Mammary epithelial cell (primary cell): ENCODE measurements at regions of chr20 and their contacts with region 1.

Region 1: DNA sequence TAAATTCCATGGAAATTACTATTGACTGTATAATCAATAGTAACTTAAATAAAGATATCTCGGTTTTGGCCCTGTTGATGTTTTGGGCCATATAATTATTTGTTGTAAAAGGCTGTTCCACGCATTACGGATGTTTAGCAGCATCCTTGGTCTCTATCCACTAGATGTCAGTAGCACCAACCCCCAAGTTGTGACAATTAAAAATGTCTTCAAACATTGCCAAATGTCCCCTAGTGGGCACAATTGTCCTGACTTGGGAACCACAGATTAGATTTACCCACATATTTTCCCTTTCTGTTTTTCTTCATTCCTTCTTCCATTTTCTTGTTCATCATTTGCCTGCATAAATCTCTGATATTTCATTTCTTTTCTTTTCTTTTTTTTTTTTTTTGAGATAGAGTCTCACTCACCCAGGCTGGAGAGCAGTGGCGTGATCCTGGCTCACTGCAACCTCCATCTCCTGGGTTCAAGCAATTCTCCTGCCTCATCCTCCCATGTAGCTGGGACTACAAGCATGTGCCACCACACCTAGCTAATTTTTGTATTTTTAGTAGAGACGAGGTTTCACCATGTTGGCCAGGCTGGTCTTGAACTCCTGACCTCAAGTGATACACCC is 13.6 kb upstream of the WFDC8 start:
- DNase-seq: peak; percentile 56
- H3K4me3 ChIP-seq: no peak overlapping the region
- H3K27ac ChIP-seq: no peak overlapping the region
- H3K4me1 ChIP-seq: no peaks in the 10 kb centered on the region
- H3K27me3 ChIP-seq: peaks cover 4% of the 10 kb centered on the region
- CTCF ChIP-seq: peak; percentile 76 to 95

Region 2: GRCh38 chr20:45629496-45630100 is 36.9 kb after region 1 on chr20 and contains the start of gene WFDC10A:
- CTCF ChIA-PET with region 1: no interaction called
- dilution Hi-C with region 1: no loop called
- in situ Hi-C with region 1: no loop called
- intact Hi-C with region 1: loop called (anchors 5 kb)
- DNase-seq: peak; percentile 68
- H3K4me3 ChIP-seq: no peak within 1 kb of the TSS
- H3K27ac ChIP-seq: no peak within 1 kb of the TSS
- H3K4me1 ChIP-seq: no peaks in the 10 kb centered on the region
- H3K27me3 ChIP-seq: no peaks in the 10 kb centered on the region
- CTCF ChIP-seq: peak; percentile 88 to 96
- total RNA-seq, gene WFDC10A: not detected

Region 3: DNA sequence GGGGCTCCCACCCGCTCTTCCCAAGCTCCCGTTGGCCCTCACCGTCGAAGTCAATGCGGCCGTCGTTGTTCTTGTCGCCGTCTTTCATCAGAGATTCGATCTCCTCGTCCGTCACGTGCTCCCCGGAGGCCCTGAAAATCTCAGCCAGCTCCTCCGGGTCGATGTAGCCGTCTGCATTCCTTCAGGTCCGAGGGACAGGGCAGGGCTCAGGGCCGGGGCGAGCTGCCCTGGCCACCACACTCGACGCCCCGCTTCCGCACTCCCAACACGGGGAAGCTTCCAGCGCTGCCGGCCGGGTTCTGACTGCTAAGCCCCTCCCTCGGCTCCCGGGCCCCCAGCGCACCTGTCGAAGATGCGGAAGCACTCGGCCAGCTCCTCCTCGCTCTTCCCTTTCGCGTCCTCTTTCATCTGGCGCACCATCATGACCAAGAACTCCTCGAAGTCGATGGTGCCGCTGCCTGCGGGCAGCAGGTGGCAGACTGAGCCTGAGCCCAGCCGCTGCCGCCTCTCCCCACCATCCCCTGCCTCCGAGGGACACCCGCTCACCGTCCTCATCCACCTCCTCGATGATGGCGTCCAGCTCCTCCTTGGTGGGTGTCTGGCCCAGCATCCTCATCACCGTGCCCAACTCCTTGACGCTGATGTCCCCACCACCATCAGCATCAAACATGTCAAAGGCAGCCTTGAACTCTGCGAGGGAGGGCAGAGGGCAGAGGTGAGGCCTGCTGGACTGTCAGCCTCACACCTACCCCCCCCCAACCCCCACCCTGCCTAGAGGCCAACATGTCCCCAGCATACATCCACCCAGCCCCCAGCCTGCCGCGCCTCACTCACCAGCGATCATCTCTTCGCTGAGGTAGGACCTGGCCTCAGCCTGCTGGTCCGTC is 231.5 kb after region 1 on chr20:
- CTCF ChIA-PET with region 1: no interaction called
- dilution Hi-C with region 1: no loop called
- in situ Hi-C with region 1: no loop called
- intact Hi-C with region 1: no loop called
- DNase-seq: peak; percentile 37
- H3K4me3 ChIP-seq: peak overlapping the region in 1 of 3 experiments; percentile 35
- H3K27ac ChIP-seq: no peak overlapping the region
- H3K4me1 ChIP-seq: peaks cover 12% of the 10 kb centered on the region
- H3K27me3 ChIP-seq: no peaks in the 10 kb centered on the region
- CTCF ChIP-seq: peak; percentile 41 to 61

Region 4: DNA sequence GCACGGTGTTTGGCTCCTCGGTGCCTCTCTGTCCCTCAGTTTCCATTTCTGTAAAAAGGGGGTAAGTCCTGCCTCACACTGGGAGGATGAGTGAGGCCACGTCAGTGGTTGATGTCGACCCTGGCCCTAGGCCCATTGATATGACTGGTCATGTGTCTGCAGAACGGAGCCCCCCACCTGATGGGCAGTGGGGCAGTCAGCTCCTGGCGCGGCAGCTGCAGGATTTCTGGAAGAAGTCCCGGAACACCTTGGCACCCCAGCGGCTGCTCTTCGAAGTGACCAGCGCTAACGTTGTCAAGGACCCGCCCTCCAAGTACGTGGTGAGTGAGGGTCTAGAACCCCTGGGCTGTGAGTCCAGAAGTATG is 242.1 kb after region 1 on chr20:
- CTCF ChIA-PET with region 1: no interaction called
- dilution Hi-C with region 1: no loop called
- in situ Hi-C with region 1: no loop called
- intact Hi-C with region 1: no loop called
- DNase-seq: no peak
- H3K4me3 ChIP-seq: peak overlapping the region in 2 of 3 experiments; percentile 68 to 94
- H3K27ac ChIP-seq: no peak overlapping the region
- H3K4me1 ChIP-seq: peaks cover 26% of the 10 kb centered on the region
- H3K27me3 ChIP-seq: no peaks in the 10 kb centered on the region
- CTCF ChIP-seq: no peak